ENCODE measurements at regions of chr2 and their contacts with region 1.

Region 1: GRCh38 chr2:10844097-10844496 is 31.5 kb upstream of the PDIA6 start:
- DNase-seq: peak; percentile 92 to 95
- ATAC-seq: peak; percentile 75 to 78
- H3K4me3 ChIP-seq: peak overlapping the region; percentile 2 to 46 (median 40)
- H3K27ac ChIP-seq: peak overlapping the region; percentile 86 to 94 (median 92)
- H3K4me1 ChIP-seq: peaks cover 46 to 54% of the 10 kb centered on the region in 2 donors
- H3K27me3 ChIP-seq: no peaks in the 10 kb centered on the region
- CTCF ChIP-seq: no peak
- POLR2A ChIP-seq: peak; percentile 50 to 59

Region 2: DNA sequence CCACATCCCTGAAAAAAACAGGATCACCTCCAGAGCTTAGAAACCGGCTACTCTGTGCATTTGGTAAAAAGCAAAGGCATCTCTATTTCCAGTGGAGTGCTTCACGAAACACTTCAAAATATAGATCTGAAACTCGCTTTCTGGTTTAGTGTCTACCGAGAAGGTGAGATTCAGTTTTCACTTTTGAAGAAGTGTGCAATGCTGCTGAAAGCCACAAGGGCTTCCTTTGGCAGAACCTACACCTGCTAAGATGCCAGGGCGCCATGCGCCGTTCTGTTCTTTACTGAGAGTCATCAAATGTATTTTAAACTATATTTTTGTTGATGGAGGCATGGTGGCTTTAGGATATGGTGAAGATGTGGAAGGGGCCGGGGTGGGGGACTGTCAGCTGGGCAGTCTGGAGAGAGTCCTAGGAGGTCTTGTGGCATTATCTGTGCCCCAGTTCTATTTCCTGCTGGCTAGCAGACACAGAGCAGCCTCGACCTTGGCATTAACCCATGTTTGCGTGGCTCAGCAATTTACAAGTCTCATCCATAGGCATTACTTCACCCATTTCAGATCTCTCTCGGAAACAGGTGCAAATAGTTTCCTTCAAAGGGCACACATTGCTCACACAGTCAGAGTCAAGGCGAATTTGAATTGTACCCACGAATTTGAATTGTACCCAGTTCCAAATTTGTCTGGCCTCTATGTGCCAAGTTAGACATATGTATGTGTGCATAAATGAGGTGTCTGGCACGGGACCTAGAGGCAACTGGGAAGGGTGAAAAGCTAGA is 21.0 kb after region 1 on chr2:
- in situ Hi-C with region 1: no loop called
- intact Hi-C with region 1: loop called (anchors 2 kb)
- DNase-seq: peak in 1 of 2 donors; percentile 37
- ATAC-seq: peak; percentile 62 to 77
- H3K4me3 ChIP-seq: peak overlapping the region in 2 of 4 donors; percentile 1 to 16
- H3K27ac ChIP-seq: peak overlapping the region; percentile 37 to 53 (median 49)
- H3K4me1 ChIP-seq: peaks cover 22 to 23% of the 10 kb centered on the region in 2 donors
- H3K27me3 ChIP-seq: no peaks in the 10 kb centered on the region
- CTCF ChIP-seq: peak in 4 of 5 experiments; percentile 30 to 52 (median 38)
- POLR2A ChIP-seq: no peak

Region 3: GRCh38 chr2:10931710-10932255 is 87.7 kb after region 1 on chr2:
- in situ Hi-C with region 1: no loop called
- intact Hi-C with region 1: loop called (anchors 2 kb)
- DNase-seq: peak; percentile 90 to 95
- ATAC-seq: peak; percentile 98 to 99
- H3K4me3 ChIP-seq: no peak overlapping the region
- H3K27ac ChIP-seq: peak overlapping the region; percentile 57 to 82 (median 76)
- H3K4me1 ChIP-seq: peaks cover 8 to 16% of the 10 kb centered on the region in 2 donors
- H3K27me3 ChIP-seq: no peaks in the 10 kb centered on the region
- CTCF ChIP-seq: peak in 1 of 5 experiments; percentile 12
- POLR2A ChIP-seq: no peak

Region 4: DNA sequence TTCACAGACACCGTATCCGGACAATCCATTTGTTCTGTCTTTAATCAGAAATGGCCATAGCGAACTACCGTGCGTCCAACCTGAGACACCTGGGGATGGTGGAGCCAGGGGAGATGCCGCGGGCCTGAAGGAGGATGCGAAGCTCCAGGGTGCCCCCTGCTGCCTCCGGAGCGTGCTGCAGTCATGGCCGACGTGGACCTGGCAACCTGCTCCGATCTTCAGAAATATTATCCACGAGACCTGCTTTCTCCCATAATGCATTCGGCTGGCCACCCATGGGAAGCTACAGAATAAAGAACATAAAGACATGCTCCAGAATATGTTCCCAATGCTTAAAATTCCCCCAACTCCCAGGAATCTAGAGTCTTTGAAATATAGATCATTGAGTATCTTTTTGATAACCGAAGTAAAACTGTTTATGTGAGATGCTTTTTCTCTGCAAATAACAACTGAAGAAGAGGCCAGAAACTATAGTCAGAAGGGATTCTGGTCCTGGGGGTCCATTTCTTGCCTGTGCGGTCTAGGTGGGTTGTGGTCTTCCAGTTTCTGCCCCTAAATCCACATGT is 280.5 kb after region 1 on chr2:
- in situ Hi-C with region 1: loop called in 3 of 4 experiments (anchors 5 kb)
- intact Hi-C with region 1: no loop called
- DNase-seq: peak in 1 of 2 donors; percentile 43
- ATAC-seq: peak in 1 of 2 donors; percentile 48
- H3K4me3 ChIP-seq: no peak overlapping the region
- H3K27ac ChIP-seq: no peak overlapping the region
- H3K4me1 ChIP-seq: no peaks in the 10 kb centered on the region
- H3K27me3 ChIP-seq: no peaks in the 10 kb centered on the region
- CTCF ChIP-seq: peak; percentile 49 to 75 (median 63)
- POLR2A ChIP-seq: no peak

Measured in gastrocnemius medialis (tissue), 4 donors.